Activated CD4-positive, alpha-beta memory T cell treated with anti-CD3 and anti-CD28 coated beads for 36 hours (primary cell): ENCODE measurements at regions of chr2 and their contacts with region 1.

Region 1: DNA sequence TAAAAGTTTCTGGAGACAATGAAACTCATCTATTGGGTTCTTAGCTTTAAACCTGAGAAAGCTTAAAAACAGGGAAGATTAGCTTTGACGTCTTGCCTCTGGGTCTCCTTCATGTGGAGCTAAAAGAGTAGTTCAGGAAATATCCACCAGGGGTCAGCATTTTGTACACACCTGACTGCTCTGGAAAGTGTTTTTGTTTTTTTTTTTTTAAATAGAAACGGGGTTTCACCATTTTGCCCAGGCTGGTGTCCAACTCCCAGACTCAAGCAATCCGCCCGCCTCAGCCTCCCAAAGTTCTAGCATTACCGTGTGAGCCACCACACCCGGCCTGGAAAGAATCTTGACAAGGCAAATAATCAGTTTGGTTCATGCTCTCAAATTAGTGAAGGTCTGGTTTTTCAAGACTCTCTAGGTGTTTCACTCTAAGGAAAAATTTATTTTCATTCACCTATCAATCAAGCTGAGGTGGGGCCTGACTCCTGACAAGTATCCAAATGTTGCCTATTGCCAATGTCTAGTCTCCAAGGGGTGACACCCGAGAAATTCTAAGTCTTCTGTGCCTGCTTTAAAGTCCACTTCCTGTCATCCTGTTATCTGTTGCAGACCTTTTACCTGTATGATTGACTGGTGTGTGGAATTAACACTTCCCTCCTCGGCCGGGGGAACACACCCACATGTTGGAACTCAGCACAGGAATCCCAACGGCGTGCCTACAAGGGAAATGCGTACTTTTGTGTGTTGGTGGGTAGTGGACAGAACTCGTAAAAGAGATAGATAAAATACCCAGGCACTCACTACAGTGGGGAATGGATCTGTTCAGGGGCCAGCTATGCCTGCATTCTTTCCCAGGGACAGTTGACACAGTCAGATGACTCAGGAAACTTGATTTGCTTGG is 11.3 kb downstream of the IL1RN start:
- DNase-seq: peak; percentile 38
- H3K4me3 Mint-ChIP-seq: peak overlapping the region; percentile 23
- H3K27ac Mint-ChIP-seq: peak overlapping the region; percentile 15
- H3K4me1 Mint-ChIP-seq: peaks cover 24% of the 10 kb centered on the region
- H3K27me3 Mint-ChIP-seq: no peaks in the 10 kb centered on the region

Region 2: GRCh38 chr2:112985090-112985489 is 153.6 kb before region 1 on chr2:
- CTCF ChIA-PET with region 1: no interaction called
- POLR2A ChIA-PET with region 1: no interaction called
- intact Hi-C with region 1: no loop called
- DNase-seq: peak; percentile 55
- H3K4me3 Mint-ChIP-seq: no peak overlapping the region
- H3K27ac Mint-ChIP-seq: no peak overlapping the region
- H3K4me1 Mint-ChIP-seq: peaks cover 20% of the 10 kb centered on the region
- H3K27me3 Mint-ChIP-seq: no peaks in the 10 kb centered on the region

Region 3: DNA sequence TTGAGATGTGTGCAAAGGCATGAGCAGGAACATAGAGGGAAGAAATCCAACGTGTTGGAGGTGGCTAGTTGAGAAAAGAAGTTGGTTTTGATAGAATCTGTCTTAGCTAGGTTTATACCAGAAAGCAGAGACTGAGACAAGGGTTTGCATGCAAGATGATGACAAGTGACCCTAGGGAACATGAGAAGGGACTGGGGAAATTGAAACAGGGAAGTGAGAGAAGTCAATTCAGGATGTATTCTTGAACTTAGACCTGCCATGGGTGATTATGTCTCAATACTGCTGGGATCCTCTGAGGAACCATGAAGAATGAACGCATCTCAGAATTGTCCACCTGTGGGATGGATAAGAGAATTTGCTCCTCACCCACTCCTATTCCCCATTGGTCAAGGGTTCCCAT is 112.9 kb before region 1 on chr2:
- CTCF ChIA-PET with region 1: no interaction called
- POLR2A ChIA-PET with region 1: no interaction called
- intact Hi-C with region 1: no loop called
- DNase-seq: no peak
- H3K4me3 Mint-ChIP-seq: no peak overlapping the region
- H3K27ac Mint-ChIP-seq: no peak overlapping the region
- H3K4me1 Mint-ChIP-seq: no peaks in the 10 kb centered on the region
- H3K27me3 Mint-ChIP-seq: peaks cover 16% of the 10 kb centered on the region

Region 4: DNA sequence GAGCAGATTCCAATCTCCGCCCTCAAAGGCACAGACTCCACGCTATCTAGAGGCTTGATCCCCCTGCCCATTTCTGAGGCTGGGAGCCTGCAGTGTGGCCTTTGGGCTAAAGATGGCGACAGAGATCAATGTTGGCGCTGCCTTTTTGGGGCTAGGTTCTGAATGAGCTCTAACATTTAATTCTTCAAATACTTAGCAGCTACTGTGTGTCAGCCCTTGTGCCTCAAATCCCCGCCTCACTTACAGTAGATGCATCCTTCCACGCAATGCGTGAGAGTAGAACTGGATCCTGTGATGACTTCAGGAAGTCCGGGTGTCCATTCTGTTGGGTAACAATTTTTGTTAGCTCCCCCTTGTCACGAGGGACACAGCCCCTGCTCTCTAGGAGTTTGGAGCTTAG is 58.5 kb before region 1 on chr2:
- CTCF ChIA-PET with region 1: interaction called, 239 read pairs
- POLR2A ChIA-PET with region 1: no interaction called
- intact Hi-C with region 1: loop called (anchors 1 kb)
- DNase-seq: peak; percentile 74
- H3K4me3 Mint-ChIP-seq: no peak overlapping the region
- H3K27ac Mint-ChIP-seq: no peak overlapping the region
- H3K4me1 Mint-ChIP-seq: peaks cover 11% of the 10 kb centered on the region
- H3K27me3 Mint-ChIP-seq: peaks cover 7% of the 10 kb centered on the region

Region 5: DNA sequence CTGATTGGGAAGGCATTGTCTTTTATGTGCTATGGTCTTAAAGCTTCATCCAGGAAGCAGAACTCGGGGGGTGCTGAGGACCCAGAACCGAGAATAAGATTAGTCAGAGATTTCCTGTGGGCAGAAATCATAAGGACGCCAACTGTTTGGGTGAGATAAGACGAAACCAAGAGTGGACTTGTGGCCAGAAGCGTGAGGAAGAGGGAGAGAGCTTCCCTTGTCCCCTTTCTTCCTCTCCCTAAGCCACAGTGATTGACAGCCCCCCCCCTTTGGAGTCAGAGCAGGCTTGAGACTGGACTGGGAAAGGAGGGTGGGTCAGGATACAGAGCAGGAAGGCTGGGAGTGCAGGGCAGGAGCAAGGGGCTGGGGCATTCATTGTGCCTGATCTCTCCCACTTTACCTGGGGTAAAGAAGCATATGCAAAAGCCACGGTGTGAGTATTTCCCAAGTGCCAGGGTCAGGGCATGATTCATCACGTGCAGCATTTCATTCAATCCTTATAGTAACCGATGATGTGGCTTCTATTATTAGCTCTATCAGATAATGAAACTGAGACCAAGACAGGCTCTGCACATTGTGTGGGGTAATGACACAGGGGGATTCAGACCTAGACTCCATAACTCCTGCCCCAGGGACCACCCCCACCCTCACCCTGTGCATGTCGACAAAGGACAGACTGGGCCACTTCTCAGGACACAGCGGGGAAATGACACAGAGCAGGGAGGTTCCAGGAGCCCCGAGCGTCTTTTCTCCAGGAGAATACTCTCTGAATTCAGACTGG is 14.3 kb before region 1 on chr2:
- CTCF ChIA-PET with region 1: interaction called, 58 read pairs
- POLR2A ChIA-PET with region 1: no interaction called
- intact Hi-C with region 1: no loop called
- DNase-seq: peak; percentile 29
- H3K4me3 Mint-ChIP-seq: no peak overlapping the region
- H3K27ac Mint-ChIP-seq: peak overlapping the region; percentile 3
- H3K4me1 Mint-ChIP-seq: peaks cover 34% of the 10 kb centered on the region
- H3K27me3 Mint-ChIP-seq: peaks cover 12% of the 10 kb centered on the region

Region 6: DNA sequence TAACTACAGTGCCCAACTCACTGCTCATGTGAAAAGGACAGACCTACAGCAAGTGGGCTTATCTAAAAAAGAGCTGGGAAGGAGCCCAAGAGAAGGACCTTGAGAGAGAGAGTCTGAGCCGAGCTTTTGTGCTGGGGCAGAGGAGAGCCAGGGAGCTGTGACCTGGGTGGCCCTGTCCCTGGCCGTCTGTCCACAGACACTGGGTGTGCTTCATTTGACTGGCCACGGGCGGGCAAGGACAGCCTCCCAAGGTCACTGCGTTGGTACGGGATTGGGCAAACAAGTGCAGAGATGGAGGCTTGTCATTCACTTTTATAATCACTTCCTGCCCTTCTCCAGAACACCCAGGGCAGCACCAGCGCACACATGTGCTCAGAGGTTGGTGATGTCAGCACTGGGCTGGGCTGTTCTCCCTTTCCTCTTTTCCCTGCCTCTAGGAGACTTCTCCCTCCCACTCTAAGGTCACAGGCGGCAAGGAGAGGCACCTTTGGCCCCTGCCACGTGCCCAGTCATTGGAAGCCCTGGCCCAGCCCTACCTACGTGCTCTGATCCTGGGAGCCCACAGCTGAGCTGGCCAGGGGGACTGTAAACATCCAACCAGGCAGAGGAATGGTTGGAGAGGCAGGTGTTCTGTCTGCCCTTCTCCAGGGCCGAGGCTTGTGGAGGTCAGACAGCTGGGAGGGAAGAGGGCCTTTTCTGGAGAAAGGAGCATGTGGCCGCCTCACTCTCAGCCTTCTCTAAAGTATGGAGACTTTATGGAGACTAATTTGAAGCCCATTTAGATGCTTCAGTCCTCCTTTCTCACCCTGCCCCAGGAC is 28.6 kb after region 1 on chr2:
- CTCF ChIA-PET with region 1: interaction called, 118 read pairs
- POLR2A ChIA-PET with region 1: interaction called, 3 read pairs
- intact Hi-C with region 1: no loop called
- DNase-seq: peak; percentile 71
- H3K4me3 Mint-ChIP-seq: peak overlapping the region; percentile 61
- H3K27ac Mint-ChIP-seq: peak overlapping the region; percentile 94
- H3K4me1 Mint-ChIP-seq: peaks cover 63% of the 10 kb centered on the region
- H3K27me3 Mint-ChIP-seq: no peaks in the 10 kb centered on the region

Region 7: DNA sequence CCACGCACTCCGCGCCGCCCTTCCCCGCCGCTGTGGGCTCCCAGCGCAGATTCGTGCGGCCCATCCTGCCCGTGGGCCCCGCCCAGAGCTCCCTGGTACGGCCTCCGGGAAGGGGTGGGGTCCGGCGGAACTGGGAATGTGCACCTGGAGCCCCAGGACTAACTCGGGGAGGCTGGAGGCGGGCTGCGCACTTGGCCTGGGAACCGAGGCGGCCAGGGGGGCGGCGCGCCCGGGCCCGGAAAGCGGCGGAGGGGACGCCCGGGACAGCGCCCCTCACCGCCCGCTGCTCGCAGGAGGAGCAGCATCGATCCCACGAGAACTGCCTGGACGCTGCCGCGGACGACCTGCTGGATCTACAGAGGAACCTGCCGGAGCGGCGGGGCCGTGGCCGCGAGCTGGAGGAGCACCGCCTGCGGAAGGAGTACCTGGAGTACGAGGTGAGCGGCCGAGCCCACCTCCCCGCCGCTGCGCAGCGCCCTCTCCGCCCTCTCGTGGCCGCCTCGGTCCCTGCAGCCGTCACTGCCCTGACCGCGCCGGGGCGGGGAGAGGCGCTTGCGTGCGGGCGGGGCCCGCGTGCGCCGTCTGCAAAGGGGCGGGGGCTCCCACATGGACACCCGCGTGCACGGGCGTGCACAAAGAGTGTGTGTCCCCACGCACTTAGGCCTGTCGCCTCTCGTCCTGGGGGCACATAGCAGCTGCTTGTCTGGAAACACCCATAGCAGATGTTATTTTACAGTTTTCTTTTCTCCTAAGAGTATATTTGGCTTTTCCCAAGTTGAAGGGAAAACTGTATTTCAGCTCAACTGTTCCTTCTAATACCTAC is 60.3 kb after region 1 on chr2:
- CTCF ChIA-PET with region 1: interaction called, 308 read pairs
- POLR2A ChIA-PET with region 1: interaction called, 4 read pairs
- intact Hi-C with region 1: loop called (anchors 1 kb)
- DNase-seq: peak; percentile 85
- H3K4me3 Mint-ChIP-seq: no peak overlapping the region
- H3K27ac Mint-ChIP-seq: peak overlapping the region; percentile 58
- H3K4me1 Mint-ChIP-seq: peaks cover 26% of the 10 kb centered on the region
- H3K27me3 Mint-ChIP-seq: no peaks in the 10 kb centered on the region

Region 8: GRCh38 chr2:113214141-113214540 is 75.5 kb after region 1 on chr2:
- CTCF ChIA-PET with region 1: no interaction called
- POLR2A ChIA-PET with region 1: no interaction called
- intact Hi-C with region 1: no loop called
- DNase-seq: no peak
- H3K4me3 Mint-ChIP-seq: no peak overlapping the region
- H3K27ac Mint-ChIP-seq: no peak overlapping the region
- H3K4me1 Mint-ChIP-seq: peaks cover 8% of the 10 kb centered on the region
- H3K27me3 Mint-ChIP-seq: no peaks in the 10 kb centered on the region

Region 9: GRCh38 chr2:113370478-113371091 is 231.9 kb after region 1 on chr2:
- CTCF ChIA-PET with region 1: interaction called, 7 read pairs
- POLR2A ChIA-PET with region 1: no interaction called
- intact Hi-C with region 1: loop called (anchors 1 kb)
- DNase-seq: peak; percentile 80
- H3K4me3 Mint-ChIP-seq: no peak overlapping the region
- H3K27ac Mint-ChIP-seq: no peak overlapping the region
- H3K4me1 Mint-ChIP-seq: peaks cover 4% of the 10 kb centered on the region
- H3K27me3 Mint-ChIP-seq: peaks cover 5% of the 10 kb centered on the region